Activated T-helper 2 cell treated with anti-CD3 and anti-CD28 coated beads, Interferon-gamma antibody, Interleukin-2, Interleukin-4, amounts not matched to agents 10 μg/mL and 5 μg/mL and 100 μg/mL, durations not matched to agents 14 hours and 24 hours and 36 hours (primary cell): ENCODE measurements at regions of chr1 and their contacts with region 1.

Region 1: GRCh38 chr1:40404670-40405462 is 31.3 kb downstream of the SMAP2 start:
- DNase-seq: no peak
- H3K4me3 Mint-ChIP-seq: peak overlapping the region; percentile 28
- H3K27ac Mint-ChIP-seq: peak overlapping the region; percentile 87
- H3K4me1 Mint-ChIP-seq: peaks cover 46% of the 10 kb centered on the region
- H3K27me3 Mint-ChIP-seq: no peaks in the 10 kb centered on the region

Region 2: DNA sequence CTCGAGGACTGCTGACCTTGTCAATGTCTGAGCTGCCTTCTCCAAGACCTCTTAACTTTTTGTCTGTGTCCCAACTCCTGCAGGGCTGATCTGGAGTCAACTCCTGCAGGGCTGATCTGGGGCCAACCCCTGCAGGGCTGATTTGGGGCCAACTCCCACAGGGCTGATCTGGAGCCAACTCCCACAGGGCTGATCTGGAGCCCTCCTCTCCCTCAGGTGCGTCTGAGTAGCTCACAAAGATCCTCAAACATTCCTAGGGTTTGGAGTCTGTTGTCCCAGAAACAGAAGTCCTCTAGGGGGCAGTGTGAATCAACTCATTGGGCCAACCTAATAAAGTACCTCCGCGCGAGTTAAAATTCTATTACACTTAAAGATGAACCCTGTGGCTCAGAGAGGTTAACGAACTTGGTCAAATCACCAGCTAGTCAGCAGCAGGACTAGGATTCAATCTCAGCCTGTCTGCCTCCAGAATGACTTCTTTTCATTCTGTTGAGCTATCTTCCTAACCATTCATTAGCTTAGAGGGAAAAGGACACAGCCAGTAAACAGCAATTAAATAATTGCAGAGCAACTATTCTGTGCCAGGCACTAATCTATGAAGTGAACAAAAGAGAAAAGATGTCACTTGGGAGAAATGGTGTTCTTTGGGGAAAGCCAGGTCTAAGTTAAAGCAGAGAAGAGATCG is 260.8 kb before region 1 on chr1:
- intact Hi-C with region 1: loop called (anchors 5 kb)
- DNase-seq: peak; percentile 28
- H3K4me3 Mint-ChIP-seq: no peak overlapping the region
- H3K27ac Mint-ChIP-seq: no peak overlapping the region
- H3K4me1 Mint-ChIP-seq: peaks cover 18% of the 10 kb centered on the region
- H3K27me3 Mint-ChIP-seq: peaks cover 49% of the 10 kb centered on the region

Region 3: DNA sequence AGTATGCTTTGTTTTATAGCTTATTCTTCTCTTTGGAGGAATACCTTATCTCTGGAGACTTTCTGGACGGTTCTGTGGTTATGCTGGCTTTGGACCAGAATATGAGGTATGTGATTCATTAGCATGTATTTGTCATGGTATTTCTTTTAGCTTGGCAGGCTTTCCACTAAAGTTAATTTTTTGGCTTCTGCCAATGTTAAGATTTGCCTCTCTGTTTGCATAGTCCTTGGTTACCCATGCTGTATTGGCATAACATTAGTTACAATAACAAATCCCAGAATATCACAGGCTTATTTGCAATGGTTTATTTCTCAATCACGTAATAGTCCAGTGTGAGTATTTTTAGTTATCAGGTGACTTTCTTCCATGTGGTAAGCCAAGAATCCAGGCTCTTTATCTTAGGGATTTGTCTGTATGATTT is 137.1 kb before region 1 on chr1:
- intact Hi-C with region 1: no loop called
- DNase-seq: no peak
- H3K4me3 Mint-ChIP-seq: no peak overlapping the region
- H3K27ac Mint-ChIP-seq: no peak overlapping the region
- H3K4me1 Mint-ChIP-seq: peaks cover 44% of the 10 kb centered on the region
- H3K27me3 Mint-ChIP-seq: no peaks in the 10 kb centered on the region

Region 4: DNA sequence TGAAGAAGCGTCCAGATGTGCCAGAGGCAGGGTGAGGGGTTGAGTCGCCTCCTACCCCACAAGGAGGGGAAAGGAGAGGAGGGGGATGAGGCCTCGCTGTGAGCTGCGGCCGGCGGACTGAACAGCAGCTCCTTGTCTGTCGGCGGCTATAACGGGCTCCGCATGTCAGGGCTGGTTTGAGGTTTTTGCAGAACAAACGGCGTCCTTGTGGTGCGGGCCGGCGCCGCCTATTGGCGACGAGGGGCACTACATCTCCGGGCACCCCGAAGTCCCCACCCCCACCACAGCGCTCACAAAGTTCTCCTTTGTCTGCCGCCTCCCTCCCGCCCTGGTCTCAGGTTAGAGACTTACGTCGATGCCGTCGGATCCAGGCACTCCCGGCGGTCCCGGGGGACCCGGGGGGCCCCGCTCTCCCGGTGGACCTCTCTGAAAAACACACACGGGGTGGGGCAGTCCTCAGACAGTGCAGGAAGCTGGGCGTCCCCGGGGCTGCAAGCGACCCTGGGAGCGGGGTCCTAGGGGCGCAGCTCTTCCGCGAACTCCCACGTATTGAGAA is 89.5 kb before region 1 on chr1:
- intact Hi-C with region 1: loop called (anchors 2 kb)
- DNase-seq: peak; percentile 81
- H3K4me3 Mint-ChIP-seq: peak overlapping the region; percentile 78
- H3K27ac Mint-ChIP-seq: no peak overlapping the region
- H3K4me1 Mint-ChIP-seq: peaks cover 45% of the 10 kb centered on the region
- H3K27me3 Mint-ChIP-seq: peaks cover 16% of the 10 kb centered on the region

Region 5: GRCh38 chr1:40338745-40339424 is 66.0 kb before region 1 on chr1:
- intact Hi-C with region 1: loop called (anchors 1 kb)
- DNase-seq: peak; percentile 82
- H3K4me3 Mint-ChIP-seq: no peak overlapping the region
- H3K27ac Mint-ChIP-seq: no peak overlapping the region
- H3K4me1 Mint-ChIP-seq: peaks cover 37% of the 10 kb centered on the region
- H3K27me3 Mint-ChIP-seq: no peaks in the 10 kb centered on the region

Region 6: GRCh38 chr1:40373338-40374283 is 31.3 kb before region 1 on chr1 and contains the start of gene SMAP2:
- intact Hi-C with region 1: loop called (anchors 5 kb)
- DNase-seq: peak; percentile 95
- H3K4me3 Mint-ChIP-seq: peak within 1 kb of the TSS; percentile 97
- H3K27ac Mint-ChIP-seq: peak within 1 kb of the TSS; percentile 97
- H3K4me1 Mint-ChIP-seq: peaks cover 41% of the 10 kb centered on the region
- H3K27me3 Mint-ChIP-seq: no peaks in the 10 kb centered on the region
- total RNA-seq, gene SMAP2: 185 and 186 TPM in 2 replicates

Region 7: DNA sequence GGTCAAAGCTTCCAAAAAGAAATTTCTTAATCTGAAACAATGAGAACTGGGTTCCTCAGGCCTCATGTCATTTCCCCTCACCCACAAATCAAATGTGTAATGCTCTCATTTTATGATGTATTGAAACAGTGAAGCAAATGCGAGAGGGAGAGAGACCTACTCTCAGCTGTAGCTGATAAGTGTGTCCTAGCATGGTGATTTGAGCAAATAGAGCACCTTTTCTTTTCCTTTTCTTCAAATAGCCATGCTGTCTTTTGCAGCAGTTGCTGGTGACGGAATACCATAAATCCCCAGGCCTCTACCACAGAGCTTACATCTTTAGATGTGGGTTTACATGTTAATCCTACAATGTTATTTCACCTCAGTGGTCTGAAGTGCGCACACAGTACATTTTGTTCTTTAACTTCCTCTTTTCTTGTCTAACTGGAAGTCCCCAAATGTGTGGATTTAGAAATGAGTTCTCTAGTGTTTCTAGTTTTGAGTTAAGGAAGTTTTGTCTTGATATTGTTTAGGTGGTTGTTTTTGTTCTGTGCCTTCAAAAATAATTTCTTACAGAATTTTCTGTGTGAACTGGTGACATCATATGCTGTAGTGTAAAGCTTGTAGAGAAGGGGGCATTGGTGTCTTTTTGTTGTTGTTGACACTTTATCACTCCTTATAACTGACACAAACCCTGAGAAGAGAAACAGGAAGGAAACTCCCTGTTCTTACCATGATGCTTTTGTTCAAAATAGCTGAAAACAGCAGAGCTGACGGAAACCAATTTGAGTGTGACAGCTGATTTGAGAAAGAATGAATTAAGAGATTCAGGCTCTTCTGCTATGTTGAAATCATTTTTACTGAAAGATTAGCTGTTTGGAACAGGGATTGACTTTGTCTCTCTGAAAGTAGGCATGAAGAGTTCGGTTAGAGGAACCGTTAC is 19.2 kb before region 1 on chr1:
- intact Hi-C with region 1: loop called (anchors 1 kb)
- DNase-seq: peak; percentile 59
- H3K4me3 Mint-ChIP-seq: peak overlapping the region; percentile 85
- H3K27ac Mint-ChIP-seq: peak overlapping the region; percentile 99
- H3K4me1 Mint-ChIP-seq: peaks cover 86% of the 10 kb centered on the region
- H3K27me3 Mint-ChIP-seq: no peaks in the 10 kb centered on the region

Region 8: DNA sequence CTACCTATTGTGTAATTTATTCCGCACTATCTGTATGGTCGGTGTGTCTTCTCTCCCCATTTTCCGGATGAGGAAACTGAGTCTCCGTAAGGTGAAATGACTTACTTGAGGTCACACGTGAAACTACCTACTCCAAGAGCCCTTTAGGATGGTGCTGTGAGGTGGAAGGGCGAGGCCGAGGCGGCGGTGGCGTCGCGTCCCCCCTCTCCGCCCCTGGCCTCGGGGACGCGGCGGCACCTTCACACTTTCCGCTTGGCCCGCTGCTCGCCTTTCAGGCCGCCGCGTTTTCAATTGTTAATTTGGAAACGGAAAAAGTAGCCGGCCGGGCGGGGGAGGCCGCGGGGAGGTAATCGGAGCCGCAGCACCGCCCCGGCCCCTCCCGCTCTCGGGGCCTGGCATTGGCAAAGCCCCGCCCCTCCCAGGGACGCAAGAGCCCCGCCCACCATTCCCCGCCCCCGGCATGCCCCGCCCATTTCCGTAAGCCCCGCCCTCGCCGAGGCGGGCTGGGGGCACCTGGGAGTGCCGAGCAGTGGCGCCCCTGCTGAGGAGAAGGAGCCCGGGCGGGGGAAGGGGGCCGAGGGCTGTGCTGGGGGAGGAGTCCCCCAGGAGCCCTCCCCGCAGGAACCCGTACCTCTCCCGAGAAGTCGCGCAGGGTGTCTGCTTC is 397.3 kb after region 1 on chr1:
- intact Hi-C with region 1: no loop called
- DNase-seq: peak; percentile 79
- H3K4me3 Mint-ChIP-seq: peak overlapping the region; percentile 15
- H3K27ac Mint-ChIP-seq: peak overlapping the region; percentile 35
- H3K4me1 Mint-ChIP-seq: peaks cover 24% of the 10 kb centered on the region
- H3K27me3 Mint-ChIP-seq: no peaks in the 10 kb centered on the region